AG04449 (cell line): ENCODE measurements at regions of chr3 and their contacts with region 1.

Region 1: GRCh38 chr3:61872077-61872706 is 310.8 kb downstream of the PTPRG start:
- DNase-seq: no peak
- H3K4me3 ChIP-seq: no peak overlapping the region
- CTCF ChIP-seq: no peak

Region 2: DNA sequence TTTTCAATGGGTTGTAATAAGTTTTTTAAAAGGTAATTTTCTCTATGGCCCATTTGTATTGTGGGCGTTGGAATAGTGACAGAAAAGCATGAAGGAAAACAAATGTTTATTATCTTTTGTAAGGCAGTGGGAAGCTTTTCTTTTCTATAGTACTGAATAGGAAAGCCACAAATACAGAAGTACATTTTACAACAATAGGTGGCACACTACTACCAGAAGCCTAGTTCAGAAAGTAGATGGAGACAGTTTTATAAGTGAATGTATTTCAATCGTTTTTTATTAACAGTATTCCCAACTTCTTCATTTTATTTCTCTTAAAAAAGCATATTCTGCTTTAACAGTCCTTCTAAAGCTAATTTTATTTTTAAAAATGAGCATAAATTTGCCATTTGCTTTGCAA is 14.1 kb before region 1 on chr3:
- CTCF ChIA-PET with region 1: interaction called, 12 read pairs
- POLR2A ChIA-PET with region 1: no interaction called
- DNase-seq: no peak
- H3K4me3 ChIP-seq: no peak overlapping the region
- CTCF ChIP-seq: peak; percentile 31

Region 3: GRCh38 chr3:61882253-61882652 is 10.1 kb after region 1 on chr3:
- CTCF ChIA-PET with region 1: no interaction called
- POLR2A ChIA-PET with region 1: no interaction called
- DNase-seq: no peak
- H3K4me3 ChIP-seq: no peak overlapping the region
- CTCF ChIP-seq: no peak

Region 4: DNA sequence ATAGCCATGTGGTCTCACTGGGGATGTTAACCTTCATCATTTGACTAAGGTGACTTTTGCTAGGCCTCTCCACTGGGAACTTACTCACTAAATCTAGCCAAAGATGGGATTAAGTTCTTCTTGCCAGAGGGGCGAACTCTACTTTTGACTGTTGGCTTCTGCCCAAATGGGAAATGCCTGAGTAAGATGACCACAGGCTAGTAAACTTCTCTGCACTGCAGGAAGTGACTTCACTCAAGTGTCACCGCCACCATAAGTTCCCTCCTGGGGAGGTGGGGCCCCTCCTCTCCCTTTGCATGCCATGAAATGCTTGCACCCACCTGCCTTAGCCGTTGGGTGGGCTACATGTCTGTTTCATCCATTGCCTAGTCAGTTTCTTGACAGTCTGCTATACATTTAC is 112.8 kb after region 1 on chr3:
- CTCF ChIA-PET with region 1: no interaction called
- POLR2A ChIA-PET with region 1: no interaction called
- DNase-seq: peak; percentile 9
- H3K4me3 ChIP-seq: no peak overlapping the region
- CTCF ChIP-seq: no peak